PC-9 (cell line): ENCODE measurements at regions of chr16 and their contacts with region 1.

Region 1: DNA sequence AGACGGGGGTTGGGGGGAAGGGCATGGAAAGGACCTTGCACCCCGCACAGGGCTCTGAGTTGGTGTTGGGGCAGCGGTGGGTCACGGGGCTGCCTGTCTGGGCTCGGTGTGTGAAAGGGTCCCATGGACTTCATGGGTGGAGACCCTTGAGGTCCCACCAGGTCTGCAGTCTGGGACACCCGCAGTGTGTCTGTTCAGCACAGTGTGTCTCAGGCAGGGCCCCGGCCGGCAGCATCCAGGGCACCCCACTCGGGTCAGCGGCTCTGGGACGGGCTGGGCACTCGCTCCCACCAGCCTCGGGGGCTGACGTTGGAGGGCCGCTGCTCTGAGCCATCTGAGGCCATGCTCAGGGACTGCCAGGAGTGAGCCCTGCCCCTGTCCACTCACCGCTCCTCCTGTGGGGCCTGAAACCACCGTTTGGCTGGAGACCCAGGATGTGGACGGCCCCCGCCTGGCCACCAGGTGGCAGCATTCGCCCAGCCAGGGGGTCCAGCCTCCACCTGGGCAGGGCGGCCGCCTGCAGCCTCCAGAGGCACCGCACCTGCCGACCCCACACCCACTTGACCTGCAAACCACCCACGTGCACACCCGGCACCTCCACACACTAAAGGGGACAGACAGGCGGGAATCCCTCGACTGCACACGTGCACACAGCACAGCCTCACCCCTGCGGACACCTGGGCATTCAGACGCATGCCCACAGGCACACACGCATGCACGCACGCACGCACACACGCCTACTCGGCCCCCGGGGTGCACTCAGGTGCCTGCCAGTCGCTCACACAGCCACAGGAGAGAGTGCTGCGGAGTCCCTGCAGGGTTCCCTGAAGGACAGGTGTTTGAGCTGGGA is 10.1 kb upstream of the ZFPM1 start:
- DNase-seq: peak; percentile 64 to 91
- H3K4me3 ChIP-seq: no peak overlapping the region
- H3K27ac ChIP-seq: no peak overlapping the region
- H3K4me1 ChIP-seq: no peaks in the 10 kb centered on the region
- H3K27me3 ChIP-seq: peaks cover 25% of the 10 kb centered on the region
- CTCF ChIP-seq: peak; percentile 92

Region 2: GRCh38 chr16:87982491-87983415 is 460.2 kb before region 1 on chr16:
- CTCF ChIA-PET with region 1: no interaction called
- POLR2A ChIA-PET with region 1: no interaction called
- intact Hi-C with region 1: loop called (anchors 5 kb)
- DNase-seq: no peak
- H3K4me3 ChIP-seq: no peak overlapping the region
- H3K27ac ChIP-seq: no peak overlapping the region
- H3K4me1 ChIP-seq: no peaks in the 10 kb centered on the region
- H3K27me3 ChIP-seq: no peaks in the 10 kb centered on the region
- CTCF ChIP-seq: no peak

Region 3: DNA sequence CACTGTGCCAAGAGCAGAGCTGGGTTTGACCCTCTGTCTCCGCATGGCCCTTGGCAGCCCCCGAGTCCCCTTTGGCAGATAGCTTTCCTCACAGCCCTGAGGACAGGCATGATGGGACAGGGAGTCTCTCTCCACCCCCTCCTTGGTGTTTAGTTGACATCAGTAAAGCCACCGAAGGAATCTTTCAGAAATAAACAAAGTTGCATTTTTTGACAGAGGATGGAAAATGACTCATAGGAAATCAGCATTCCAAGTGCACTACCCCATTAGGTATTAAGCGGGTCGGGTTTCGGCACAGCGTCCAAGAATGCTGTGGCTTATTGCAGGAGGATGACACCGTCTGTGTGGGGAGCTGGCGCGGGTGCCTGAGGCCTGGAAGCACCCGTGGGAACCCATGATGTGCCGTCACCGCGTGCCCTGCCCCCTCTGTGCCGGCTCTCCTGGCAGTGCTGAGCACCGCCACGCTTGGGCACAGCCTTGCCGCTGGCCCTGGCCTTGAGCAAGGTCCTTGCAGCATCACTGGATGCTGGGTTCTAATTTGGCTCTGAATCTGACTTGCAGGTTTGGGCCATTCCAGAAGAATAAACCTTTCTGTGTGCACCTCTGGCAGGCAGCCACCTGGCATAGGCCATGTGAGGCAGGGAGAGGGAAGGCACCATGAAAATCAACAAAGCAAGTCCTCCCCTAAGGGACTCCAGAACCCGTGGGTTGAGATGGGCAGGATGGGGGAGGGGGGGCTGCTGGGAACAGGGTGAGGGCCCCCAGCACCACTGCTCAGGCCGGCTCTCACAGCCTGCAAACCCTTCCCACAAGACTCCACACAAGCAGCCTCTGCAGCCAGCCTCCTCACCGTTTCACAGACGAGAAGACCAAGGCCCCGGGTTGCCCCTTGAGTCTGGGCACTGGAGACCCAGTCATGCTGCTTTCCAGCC is 110.7 kb before region 1 on chr16:
- CTCF ChIA-PET with region 1: no interaction called
- POLR2A ChIA-PET with region 1: no interaction called
- intact Hi-C with region 1: no loop called
- DNase-seq: peak; percentile 97 to 98
- H3K4me3 ChIP-seq: peak overlapping the region; percentile 35; the same call in 1 of the 2 replicates
- H3K27ac ChIP-seq: peak overlapping the region; percentile 99
- H3K4me1 ChIP-seq: peaks cover 32% of the 10 kb centered on the region
- H3K27me3 ChIP-seq: no peaks in the 10 kb centered on the region
- CTCF ChIP-seq: no peak

Region 4: GRCh38 chr16:88468275-88469141 is 25.6 kb after region 1 on chr16:
- CTCF ChIA-PET with region 1: no interaction called
- POLR2A ChIA-PET with region 1: no interaction called
- intact Hi-C with region 1: no loop called
- DNase-seq: peak; percentile 44 to 64
- H3K4me3 ChIP-seq: no peak overlapping the region
- H3K27ac ChIP-seq: no peak overlapping the region
- H3K4me1 ChIP-seq: no peaks in the 10 kb centered on the region
- H3K27me3 ChIP-seq: no peaks in the 10 kb centered on the region
- CTCF ChIP-seq: no peak

Region 5: DNA sequence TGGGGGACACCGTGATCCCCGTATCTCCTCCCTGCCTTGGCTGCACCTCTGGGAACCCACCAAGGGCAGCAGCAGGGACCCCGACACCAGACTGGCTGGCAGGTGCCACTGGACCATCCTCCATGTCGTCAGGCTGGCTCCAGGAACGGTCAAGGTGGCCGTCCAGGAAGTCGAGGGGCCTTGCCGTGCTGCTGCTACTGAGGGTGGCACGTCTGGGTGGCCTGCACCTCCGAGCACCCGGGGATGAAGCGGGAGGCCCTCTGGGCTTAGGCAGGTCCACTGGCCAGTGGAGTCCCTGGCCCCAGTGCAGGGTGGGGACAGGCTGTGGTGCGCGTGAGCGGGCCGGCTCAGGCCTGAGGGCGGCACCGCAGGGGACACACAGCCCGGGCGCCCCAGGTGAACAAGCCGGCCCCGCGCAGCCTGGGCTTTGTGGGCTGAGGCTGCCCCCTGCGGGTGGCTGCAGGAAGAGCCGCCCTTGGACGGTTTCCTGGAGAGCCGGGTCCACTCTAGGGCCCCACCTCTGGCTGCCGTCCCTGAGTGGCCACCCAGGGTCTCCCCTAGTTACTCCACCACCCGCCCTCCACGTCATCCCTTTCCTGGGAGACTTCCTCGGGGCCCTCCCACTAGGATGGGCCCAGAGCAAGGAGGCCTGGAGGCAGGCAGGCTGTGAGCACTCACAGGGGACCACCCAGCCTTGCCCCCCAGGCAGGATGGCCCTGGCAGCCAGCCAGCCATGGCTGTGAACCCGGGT is 84.4 kb after region 1 on chr16:
- CTCF ChIA-PET with region 1: no interaction called
- POLR2A ChIA-PET with region 1: no interaction called
- intact Hi-C with region 1: loop called (anchors 2 kb)
- DNase-seq: peak in 1 of 2 experiments; percentile 67
- H3K4me3 ChIP-seq: no peak overlapping the region
- H3K27ac ChIP-seq: no peak overlapping the region
- H3K4me1 ChIP-seq: no peaks in the 10 kb centered on the region
- H3K27me3 ChIP-seq: no peaks in the 10 kb centered on the region
- CTCF ChIP-seq: peak; percentile 86

Region 6: GRCh38 chr16:88706288-88706964 is 263.5 kb after region 1 on chr16 and contains the starts of genes CTU2 and RNF166:
- CTCF ChIA-PET with region 1: no interaction called
- POLR2A ChIA-PET with region 1: no interaction called
- intact Hi-C with region 1: no loop called
- DNase-seq: peak; percentile 76 to 93
- H3K4me3 ChIP-seq: peak within 1 kb of the TSS; percentile 78
- H3K27ac ChIP-seq: no peak within 1 kb of the TSS
- H3K4me1 ChIP-seq: peaks cover 19% of the 10 kb centered on the region
- H3K27me3 ChIP-seq: no peaks in the 10 kb centered on the region
- CTCF ChIP-seq: no peak
- total RNA-seq, gene CTU2: 20.0 and 38.0 TPM in 2 replicates
- total RNA-seq, gene RNF166: 25.6 and 29.4 TPM in 2 replicates